Tibial artery (tissue), 4 donors: ENCODE measurements at regions of chr15 and their contacts with region 1.

Region 1: GRCh38 chr15:48510976-48511375 is 134.5 kb downstream of the FBN1 start:
- DNase-seq: peak; percentile 73 to 74
- H3K4me3 ChIP-seq: no peak overlapping the region
- H3K27ac ChIP-seq: peak overlapping the region in 1 of 2 donors; percentile 18
- H3K4me1 ChIP-seq: peaks cover 0 to 10% (median 0%) of the 10 kb centered on the region in 4 donors
- H3K27me3 ChIP-seq: no peaks in the 10 kb centered on the region
- CTCF ChIP-seq: no peak

Region 2: DNA sequence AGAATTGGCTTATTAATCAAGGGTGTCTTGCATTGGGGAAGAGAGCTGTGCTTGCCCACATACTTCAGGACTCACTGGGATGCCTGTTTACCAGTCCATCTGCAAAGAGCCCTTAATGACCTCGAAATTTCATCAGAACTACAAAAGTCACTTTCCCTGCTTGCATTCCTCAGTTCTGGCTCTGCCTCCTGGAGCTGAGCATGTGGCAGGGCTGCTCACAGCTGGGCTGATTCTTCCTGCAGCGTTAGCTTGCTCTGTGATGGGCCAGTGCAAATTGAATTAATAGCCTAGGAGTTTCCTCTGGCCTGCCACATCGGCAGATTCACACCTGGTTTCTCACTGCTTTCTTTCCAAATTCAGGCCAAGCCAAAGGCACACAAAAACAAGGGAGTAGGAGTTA is 70.9 kb before region 1 on chr15:
- intact Hi-C with region 1: no loop called
- DNase-seq: peak in 1 of 2 donors; percentile 50
- H3K4me3 ChIP-seq: no peak overlapping the region
- H3K27ac ChIP-seq: peak overlapping the region in 1 of 2 donors; percentile 10
- H3K4me1 ChIP-seq: peaks cover 0 to 15% (median 5%) of the 10 kb centered on the region in 4 donors
- H3K27me3 ChIP-seq: no peaks in the 10 kb centered on the region
- CTCF ChIP-seq: no peak

Region 3: GRCh38 chr15:48493084-48493762 is 17.8 kb before region 1 on chr15:
- intact Hi-C with region 1: loop called (anchors 1 kb)
- DNase-seq: no peak
- H3K4me3 ChIP-seq: no peak overlapping the region
- H3K27ac ChIP-seq: no peak overlapping the region
- H3K4me1 ChIP-seq: peaks cover 0 to 10% (median 0%) of the 10 kb centered on the region in 4 donors
- H3K27me3 ChIP-seq: no peaks in the 10 kb centered on the region
- CTCF ChIP-seq: no peak

Region 4: DNA sequence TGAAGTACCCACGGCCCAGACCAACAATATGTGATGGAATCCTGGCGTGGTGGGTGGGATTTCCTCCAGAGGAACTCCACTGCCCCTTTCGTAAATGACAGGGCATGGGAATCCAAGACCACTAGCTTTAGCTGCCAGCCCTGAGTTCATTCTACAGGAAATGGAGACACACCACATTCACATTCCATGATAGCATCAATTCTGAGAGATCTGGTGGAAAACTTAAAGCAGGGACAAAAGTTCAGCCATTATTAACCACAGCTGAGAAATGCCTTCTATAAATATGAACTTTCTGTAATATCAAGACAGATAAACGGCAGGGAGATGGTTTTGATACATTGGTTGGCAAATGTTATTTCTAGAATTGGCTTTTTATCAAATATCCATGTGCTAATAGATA is 36.3 kb after region 1 on chr15:
- intact Hi-C with region 1: no loop called
- DNase-seq: no peak
- H3K4me3 ChIP-seq: no peak overlapping the region
- H3K27ac ChIP-seq: no peak overlapping the region
- H3K4me1 ChIP-seq: peaks cover 0 to 23% (median 6%) of the 10 kb centered on the region in 4 donors
- H3K27me3 ChIP-seq: no peaks in the 10 kb centered on the region
- CTCF ChIP-seq: no peak